CD14-positive monocyte (primary cell): ENCODE measurements at regions of chr11 and their contacts with region 1.

Region 1: DNA sequence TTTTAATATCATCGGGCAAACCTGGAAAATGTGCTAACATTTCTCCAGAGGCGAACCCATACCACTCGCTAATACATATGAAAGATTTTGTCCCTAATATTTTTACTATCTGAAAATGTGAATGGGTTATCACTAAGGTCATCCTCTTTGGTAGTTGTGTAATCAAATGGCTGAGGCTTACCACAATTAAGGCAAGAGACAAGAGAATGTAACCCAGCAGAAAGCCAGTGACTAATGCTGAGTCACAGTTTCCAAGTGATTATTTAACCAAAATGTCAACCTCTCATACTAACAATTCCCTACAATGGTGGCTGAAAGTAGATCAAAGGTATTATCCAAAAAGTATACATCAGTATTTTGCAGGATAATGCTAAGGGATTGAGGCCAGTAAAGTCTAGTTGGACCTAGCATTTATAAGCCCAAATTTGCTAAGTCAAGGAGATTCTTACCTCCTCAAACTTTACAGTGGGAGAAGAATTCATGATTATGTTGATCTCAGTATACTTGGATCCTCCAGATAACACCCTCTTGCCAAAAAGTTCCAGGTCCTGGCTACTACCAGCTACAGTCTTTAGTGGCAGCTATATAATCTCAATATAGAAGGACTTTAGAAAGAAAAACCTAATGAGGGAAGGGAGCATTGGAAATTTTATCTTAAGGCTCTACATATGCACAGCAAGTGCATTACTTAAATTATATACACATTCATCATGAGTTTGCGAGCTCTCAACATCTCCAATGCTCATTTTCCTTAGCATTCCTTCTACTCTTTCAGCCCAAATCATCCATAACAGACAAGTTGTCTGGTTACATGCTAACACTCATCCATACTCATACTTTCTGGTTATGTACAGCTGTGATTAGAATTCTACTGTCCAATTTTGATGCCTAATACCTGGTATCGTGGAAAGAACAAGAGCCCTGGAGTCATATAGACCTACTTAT is 25.4 kb downstream of the SIK3 start:
- DNase-seq: peak; percentile 78 to 92 (median 88)
- H3K4me3 ChIP-seq: peak overlapping the region in 1 of 3 experiments; percentile 13
- H3K4me3 Mint-ChIP-seq: no peak overlapping the region
- H3K27ac ChIP-seq: peak overlapping the region in 1 of 2 donors; percentile 66
- H3K27ac Mint-ChIP-seq: peak overlapping the region; percentile 46 to 92 (median 75)
- H3K4me1 ChIP-seq: peaks cover 67 to 84% of the 10 kb centered on the region in 2 donors
- H3K4me1 Mint-ChIP-seq: peaks cover 67% of the 10 kb centered on the region
- H3K27me3 ChIP-seq: no peaks in the 10 kb centered on the region
- H3K27me3 Mint-ChIP-seq: no peaks in the 10 kb centered on the region
- CTCF ChIP-seq: no peak

Region 2: DNA sequence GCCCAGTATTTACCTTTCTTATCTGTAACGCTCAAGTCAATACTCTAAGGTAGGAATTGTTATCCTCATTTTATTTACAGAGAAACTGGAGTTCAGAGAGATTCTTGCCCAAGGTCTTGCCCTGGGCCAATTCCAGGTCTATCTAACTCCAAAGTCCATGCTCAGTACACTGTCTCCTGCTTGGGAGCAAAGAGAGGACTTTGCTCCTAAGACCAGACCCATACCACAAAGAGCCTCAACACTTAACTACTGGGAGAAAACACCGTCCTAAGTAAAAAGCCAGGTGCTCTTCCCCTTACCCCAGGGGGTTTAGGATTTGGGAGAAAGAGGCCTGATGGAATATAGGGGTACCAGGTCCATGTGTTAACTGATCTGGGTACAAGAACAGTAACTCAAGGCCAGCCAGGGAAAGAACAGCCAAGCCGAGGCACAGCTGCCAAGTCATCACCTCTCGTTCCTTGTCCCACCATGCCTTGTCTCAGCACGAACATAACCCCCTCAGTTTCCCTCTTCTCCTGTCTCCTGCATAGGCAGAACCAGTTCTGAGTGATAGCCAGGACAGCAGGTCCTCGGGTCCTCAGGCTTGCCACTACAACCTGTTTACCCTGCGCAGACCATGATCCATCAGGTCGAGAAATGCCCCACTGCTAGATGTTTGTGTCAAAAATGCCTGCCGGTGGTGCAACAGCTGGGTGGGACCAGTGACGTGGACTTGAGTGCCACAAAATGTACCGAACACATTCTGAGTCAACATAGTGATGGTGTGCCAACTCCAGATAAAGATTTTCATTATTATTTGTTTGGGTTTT is 264.2 kb before region 1 on chr11:
- intact Hi-C with region 1: no loop called
- DNase-seq: no peak
- H3K4me3 ChIP-seq: no peak overlapping the region
- H3K4me3 Mint-ChIP-seq: no peak overlapping the region
- H3K27ac ChIP-seq: no peak overlapping the region
- H3K27ac Mint-ChIP-seq: no peak overlapping the region
- H3K4me1 ChIP-seq: no peaks in the 10 kb centered on the region
- H3K4me1 Mint-ChIP-seq: no peaks in the 10 kb centered on the region
- H3K27me3 ChIP-seq: no peaks in the 10 kb centered on the region
- H3K27me3 Mint-ChIP-seq: peaks cover 3 to 8% (median 3%) of the 10 kb centered on the region in 3 donors
- CTCF ChIP-seq: no peak

Region 3: DNA sequence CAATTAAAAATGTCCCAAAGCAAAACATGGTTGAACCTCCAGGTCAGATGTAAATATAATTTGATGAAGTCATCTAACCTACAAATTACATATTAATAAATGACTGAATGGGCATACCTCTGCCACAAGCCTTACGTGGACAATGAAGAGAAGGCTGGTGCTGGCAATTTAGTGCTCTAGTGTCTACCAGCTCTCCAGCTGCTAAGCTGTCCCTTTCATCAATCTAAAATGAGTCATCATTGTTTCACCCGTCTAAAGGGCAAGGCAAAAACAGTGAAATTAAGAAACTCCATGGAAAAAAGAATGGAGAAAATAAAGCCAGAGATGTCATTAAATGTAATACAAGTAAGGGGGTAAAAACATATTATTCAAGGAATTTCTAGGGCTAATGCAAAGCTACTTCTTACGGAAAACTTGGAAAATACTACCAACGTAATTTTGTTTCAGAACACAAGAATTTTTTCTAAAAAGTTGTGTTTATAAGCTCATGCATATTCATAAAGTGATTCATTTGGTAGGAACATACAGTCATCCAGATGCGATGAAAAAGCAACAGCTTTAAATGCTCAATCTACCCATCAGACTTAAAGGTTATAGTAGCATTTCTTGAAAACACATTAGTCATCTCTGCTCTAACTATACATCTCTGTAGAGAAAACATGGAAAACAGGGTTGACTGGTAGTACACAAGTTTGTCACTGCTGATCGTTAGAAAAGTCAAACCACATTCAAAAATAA is 46.0 kb before region 1 on chr11:
- intact Hi-C with region 1: loop called in 1 of 2 experiments (anchors 5 kb)
- DNase-seq: peak in 2 of 3 donors; percentile 39 to 56
- H3K4me3 ChIP-seq: no peak overlapping the region
- H3K4me3 Mint-ChIP-seq: no peak overlapping the region
- H3K27ac ChIP-seq: peak overlapping the region in 1 of 2 donors; percentile 10
- H3K27ac Mint-ChIP-seq: peak overlapping the region in 4 of 7 donors; percentile 12 to 74 (median 31)
- H3K4me1 ChIP-seq: peaks cover 32 to 39% of the 10 kb centered on the region in 2 donors
- H3K4me1 Mint-ChIP-seq: peaks cover 62% of the 10 kb centered on the region
- H3K27me3 ChIP-seq: no peaks in the 10 kb centered on the region
- H3K27me3 Mint-ChIP-seq: no peaks in the 10 kb centered on the region
- CTCF ChIP-seq: no peak

Region 4: GRCh38 chr11:117098269-117099232 is 25.8 kb after region 1 on chr11 and contains the start of gene SIK3:
- intact Hi-C with region 1: no loop called
- DNase-seq: peak; percentile 92 to 95 (median 93)
- H3K4me3 ChIP-seq: peak within 1 kb of the TSS; percentile 85 to 97 (median 89)
- H3K4me3 Mint-ChIP-seq: peak within 1 kb of the TSS; percentile 99 to 100
- H3K27ac ChIP-seq: peak within 1 kb of the TSS; percentile 82 to 97
- H3K27ac Mint-ChIP-seq: peak within 1 kb of the TSS; percentile 98 to 100 (median 99)
- H3K4me1 ChIP-seq: peaks cover 38 to 40% of the 10 kb centered on the region in 2 donors
- H3K4me1 Mint-ChIP-seq: peaks cover 45% of the 10 kb centered on the region
- H3K27me3 ChIP-seq: no peaks in the 10 kb centered on the region
- H3K27me3 Mint-ChIP-seq: no peaks in the 10 kb centered on the region
- CTCF ChIP-seq: peak; percentile 45
- polyA plus RNA-seq, gene SIK3: 18.3 to 142 (median 20.0) TPM